Adrenal gland (tissue), 19 donors: ENCODE measurements at regions of chr4 and their contacts with region 1.

Region 1: GRCh38 chr4:152640058-152640833 is 39.6 kb downstream of the TMEM154 start:
- DNase-seq: peak in 5 of 7 donors; percentile 22 to 45 (median 35)
- H3K4me3 ChIP-seq: no peak overlapping the region
- H3K27ac ChIP-seq: no peak overlapping the region
- H3K4me1 ChIP-seq: peaks cover 0 to 4% of the 10 kb centered on the region in 2 donors
- H3K27me3 ChIP-seq: no peaks in the 10 kb centered on the region
- CTCF ChIP-seq: peak; percentile 48 to 75 (median 67)
- POLR2A ChIP-seq: no peak

Region 2: DNA sequence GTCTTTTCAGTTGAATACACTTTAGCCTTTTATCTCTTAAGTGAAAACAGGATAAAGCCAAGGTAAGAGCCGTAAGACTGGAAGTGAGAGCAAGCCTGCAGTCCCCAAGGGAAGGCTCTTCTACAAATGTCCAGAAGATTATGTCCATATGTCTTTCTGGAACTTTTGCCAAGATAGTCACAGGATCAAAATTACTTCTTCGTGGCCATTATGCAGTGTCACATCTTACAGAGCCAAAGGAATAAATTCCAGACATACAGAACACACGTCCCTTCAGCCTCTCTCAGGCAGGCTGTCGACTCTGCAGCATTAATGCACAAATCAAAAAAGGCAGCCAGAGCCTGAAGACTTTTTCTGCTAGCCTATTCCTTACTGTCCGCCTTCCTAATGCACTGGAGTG is 868.6 kb before region 1 on chr4:
- intact Hi-C with region 1: no loop called
- DNase-seq: no peak
- H3K4me3 ChIP-seq: no peak overlapping the region
- H3K27ac ChIP-seq: no peak overlapping the region
- H3K4me1 ChIP-seq: no peaks in the 10 kb centered on the region
- H3K27me3 ChIP-seq: no peaks in the 10 kb centered on the region
- CTCF ChIP-seq: no peak
- POLR2A ChIP-seq: no peak

Region 3: DNA sequence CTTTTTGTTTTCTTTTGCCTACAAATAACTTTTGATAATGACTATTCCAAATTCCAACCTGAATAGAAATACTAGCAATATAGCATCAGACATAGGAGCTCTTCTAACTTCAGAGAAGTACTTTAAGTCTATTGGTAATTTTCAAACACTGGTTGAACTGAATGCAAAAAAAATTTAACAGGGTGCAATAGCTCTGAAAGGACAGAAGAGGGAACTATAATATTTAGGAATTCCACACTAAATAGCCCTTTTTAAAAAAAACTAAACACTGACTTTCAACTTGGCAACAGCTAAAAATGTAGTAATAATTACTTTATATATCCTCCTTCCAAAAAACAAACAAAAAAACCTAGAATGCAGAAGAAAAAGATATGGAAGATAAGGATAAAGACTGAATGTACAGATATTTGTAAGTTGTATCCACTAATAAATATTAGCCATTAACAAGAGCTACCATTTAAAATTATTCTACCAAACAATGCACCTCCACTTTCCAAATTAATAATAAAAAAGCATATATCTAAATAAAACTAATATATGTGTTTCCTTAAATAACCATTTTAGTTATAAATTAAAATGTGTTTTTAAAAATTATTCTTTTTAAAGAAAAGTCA is 185.7 kb before region 1 on chr4:
- intact Hi-C with region 1: loop called in 1 of 2 experiments (anchors 5 kb)
- DNase-seq: no peak
- H3K4me3 ChIP-seq: no peak overlapping the region
- H3K27ac ChIP-seq: no peak overlapping the region
- H3K4me1 ChIP-seq: no peaks in the 10 kb centered on the region
- H3K27me3 ChIP-seq: no peaks in the 10 kb centered on the region
- CTCF ChIP-seq: peak; percentile 33 to 69 (median 57)
- POLR2A ChIP-seq: no peak

Region 4: DNA sequence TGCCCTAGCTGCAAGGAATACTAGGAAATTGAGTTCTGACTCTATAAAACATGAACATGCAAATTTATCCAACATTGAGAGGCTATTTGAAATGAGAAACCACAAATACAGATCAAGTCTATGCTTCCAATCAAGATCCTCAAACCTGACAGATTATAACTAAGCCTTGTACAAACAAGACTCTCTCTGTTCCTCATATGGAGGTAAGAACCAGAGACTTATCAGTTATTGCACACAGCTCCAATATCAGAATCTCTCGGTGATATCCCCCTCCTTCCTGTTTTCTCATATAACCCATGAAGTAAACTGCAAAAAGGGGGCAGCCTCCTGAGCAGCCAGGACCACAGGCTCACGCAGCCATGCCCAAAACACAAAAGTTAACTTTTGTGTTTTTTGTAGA is 140.9 kb before region 1 on chr4:
- intact Hi-C with region 1: loop called in 1 of 2 experiments (anchors 10 kb)
- DNase-seq: no peak
- H3K4me3 ChIP-seq: no peak overlapping the region
- H3K27ac ChIP-seq: no peak overlapping the region
- H3K4me1 ChIP-seq: no peaks in the 10 kb centered on the region
- H3K27me3 ChIP-seq: no peaks in the 10 kb centered on the region
- CTCF ChIP-seq: no peak
- POLR2A ChIP-seq: no peak